Endothelial cell of umbilical vein (primary cell): ENCODE measurements at regions of chr4 and their contacts with region 1.

Region 1: GRCh38 chr4:118888666-118889311 is at the start of gene SYNPO2:
- DNase-seq: peak; percentile 76
- H3K4me3 ChIP-seq: peak within 1 kb of the TSS; percentile 8 to 50 (median 30)
- H3K27ac ChIP-seq: no peak within 1 kb of the TSS
- H3K4me1 ChIP-seq: peaks cover 8% of the 10 kb centered on the region
- H3K27me3 ChIP-seq: no peaks in the 10 kb centered on the region
- CTCF ChIP-seq: no peak
- POLR2A ChIP-seq: no peak
- total RNA-seq, gene SYNPO2: 0.07 and 0.13 TPM in 2 replicates

Region 2: GRCh38 chr4:118684873-118685811 is 203.6 kb before region 1 on chr4 and contains the start of gene METTL14:
- CTCF ChIA-PET with region 1: interaction called, 3 read pairs
- POLR2A ChIA-PET with region 1: no interaction called
- dilution Hi-C with region 1: no loop called
- intact Hi-C with region 1: loop called (anchors 5 kb)
- DNase-seq: peak; percentile 94
- H3K4me3 ChIP-seq: peak within 1 kb of the TSS; percentile 74 to 95 (median 82)
- H3K27ac ChIP-seq: peak within 1 kb of the TSS; percentile 44
- H3K4me1 ChIP-seq: peaks cover 11% of the 10 kb centered on the region
- H3K27me3 ChIP-seq: no peaks in the 10 kb centered on the region
- CTCF ChIP-seq: peak in 1 of 2 donors; percentile 2
- POLR2A ChIP-seq: peak; percentile 89
- total RNA-seq, gene METTL14: 38.6 and 42.9 TPM in 2 replicates

Region 3: DNA sequence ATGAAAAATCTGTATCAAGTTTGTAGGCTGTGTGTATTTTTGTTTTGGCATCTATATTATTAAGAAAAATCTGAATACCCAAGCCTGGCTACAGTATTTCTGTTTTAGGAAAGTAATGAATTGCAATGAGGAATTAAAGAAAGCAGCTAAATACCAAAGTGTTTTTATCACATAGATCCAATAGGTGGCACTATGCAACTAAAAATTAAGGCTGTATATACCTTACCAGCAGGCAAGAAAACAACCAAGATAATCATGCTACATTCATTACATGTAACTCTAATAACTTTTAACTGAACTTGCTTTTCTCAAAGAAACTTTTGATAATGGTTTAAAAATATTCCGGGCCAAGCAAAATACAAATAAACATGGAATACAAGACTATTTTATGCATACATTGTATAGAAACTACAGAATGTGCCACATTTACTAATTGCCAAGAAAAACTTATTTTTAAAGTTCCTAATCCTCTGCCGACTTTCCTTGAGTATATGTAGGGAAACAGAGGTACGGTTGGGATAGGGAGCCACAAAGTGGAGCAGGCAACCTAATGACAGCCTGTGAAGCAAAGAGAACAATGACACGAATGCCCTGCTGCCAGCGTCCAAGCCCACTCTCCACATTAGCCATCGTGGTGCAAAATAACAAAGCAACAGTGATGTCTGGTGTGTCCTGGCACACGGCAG is 116.6 kb before region 1 on chr4:
- CTCF ChIA-PET with region 1: interaction called, 19 read pairs
- POLR2A ChIA-PET with region 1: no interaction called
- dilution Hi-C with region 1: no loop called
- intact Hi-C with region 1: loop called (anchors 1 kb)
- DNase-seq: peak; percentile 55
- H3K4me3 ChIP-seq: no peak overlapping the region
- H3K27ac ChIP-seq: peak overlapping the region; percentile 1
- H3K4me1 ChIP-seq: peaks cover 35% of the 10 kb centered on the region
- H3K27me3 ChIP-seq: no peaks in the 10 kb centered on the region
- CTCF ChIP-seq: peak in 1 of 2 donors; percentile 32
- POLR2A ChIP-seq: no peak

Region 4: GRCh38 chr4:118865091-118865708 is 23.6 kb before region 1 on chr4:
- CTCF ChIA-PET with region 1: interaction called, 10 read pairs
- POLR2A ChIA-PET with region 1: no interaction called
- dilution Hi-C with region 1: no loop called
- intact Hi-C with region 1: loop called (anchors 2 kb)
- DNase-seq: peak; percentile 64
- H3K4me3 ChIP-seq: no peak overlapping the region
- H3K27ac ChIP-seq: no peak overlapping the region
- H3K4me1 ChIP-seq: peaks cover 13% of the 10 kb centered on the region
- H3K27me3 ChIP-seq: no peaks in the 10 kb centered on the region
- CTCF ChIP-seq: peak; percentile 58 to 77
- POLR2A ChIP-seq: no peak

Region 5: DNA sequence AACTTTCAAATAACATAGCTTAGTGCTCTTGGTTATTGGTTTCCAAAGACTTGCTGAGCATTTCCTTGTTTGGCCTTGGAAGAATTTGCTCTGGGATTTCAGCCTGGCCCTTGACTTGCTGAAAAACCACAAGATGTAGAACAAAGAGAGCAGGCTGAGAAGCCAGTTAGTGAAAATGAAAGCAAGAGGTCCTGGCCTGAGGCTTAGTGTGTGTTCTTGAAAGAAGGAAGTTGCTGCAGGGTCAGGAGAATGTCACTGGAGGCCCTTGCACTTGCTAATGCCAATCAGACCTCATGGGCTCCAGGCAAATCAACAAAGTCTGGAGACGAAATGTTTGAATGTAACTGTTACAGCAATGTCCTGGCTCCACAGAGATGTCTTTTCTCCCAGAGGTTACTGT is 79.2 kb after region 1 on chr4:
- CTCF ChIA-PET with region 1: interaction called, 5 read pairs
- POLR2A ChIA-PET with region 1: no interaction called
- dilution Hi-C with region 1: no loop called
- intact Hi-C with region 1: loop called (anchors 1 kb)
- DNase-seq: peak; percentile 38
- H3K4me3 ChIP-seq: no peak overlapping the region
- H3K27ac ChIP-seq: no peak overlapping the region
- H3K4me1 ChIP-seq: no peaks in the 10 kb centered on the region
- H3K27me3 ChIP-seq: no peaks in the 10 kb centered on the region
- CTCF ChIP-seq: no peak
- POLR2A ChIP-seq: no peak

Region 6: GRCh38 chr4:119585771-119586170 is 697.0 kb after region 1 on chr4:
- CTCF ChIA-PET with region 1: no interaction called
- POLR2A ChIA-PET with region 1: no interaction called
- dilution Hi-C with region 1: no loop called
- intact Hi-C with region 1: no loop called
- DNase-seq: no peak
- H3K4me3 ChIP-seq: no peak overlapping the region
- H3K27ac ChIP-seq: no peak overlapping the region
- H3K4me1 ChIP-seq: no peaks in the 10 kb centered on the region
- H3K27me3 ChIP-seq: no peaks in the 10 kb centered on the region
- CTCF ChIP-seq: no peak
- POLR2A ChIP-seq: no peak